ENCODE measurements at regions of chr20 and their contacts with region 1.

Region 1: GRCh38 chr20:20520776-20521175 is 152.9 kb downstream of the INSM1 start:
- DNase-seq: peak; percentile 67
- H3K4me3 Mint-ChIP-seq: no peak overlapping the region
- H3K27ac Mint-ChIP-seq: peak overlapping the region; percentile 29
- H3K4me1 Mint-ChIP-seq: peaks cover 19% of the 10 kb centered on the region
- H3K27me3 Mint-ChIP-seq: no peaks in the 10 kb centered on the region
- CTCF ChIP-seq: no peak

Region 2: DNA sequence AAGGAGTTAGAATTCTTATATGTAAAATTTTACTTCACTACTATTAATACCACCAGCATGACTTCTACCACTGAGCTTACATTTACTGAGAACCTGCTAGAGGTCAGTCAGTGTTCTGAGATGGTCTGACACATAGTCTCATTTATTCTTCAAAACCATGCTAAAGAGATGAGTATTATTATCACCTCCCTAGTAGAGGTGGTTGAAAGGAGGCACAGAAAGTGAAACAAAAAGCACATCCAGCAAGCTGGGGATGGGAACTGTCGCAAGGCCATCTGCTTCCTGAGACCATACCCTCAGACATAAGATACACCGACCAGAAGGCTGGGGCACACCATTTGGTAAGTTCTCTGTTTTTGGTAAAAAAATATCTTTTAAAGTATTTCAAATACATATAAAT is 15.2 kb before region 1 on chr20:
- CTCF ChIA-PET with region 1: interaction called, 3 read pairs
- POLR2A ChIA-PET with region 1: interaction called, 23 read pairs
- intact Hi-C with region 1: no loop called
- DNase-seq: no peak
- H3K4me3 Mint-ChIP-seq: no peak overlapping the region
- H3K27ac Mint-ChIP-seq: no peak overlapping the region
- H3K4me1 Mint-ChIP-seq: no peaks in the 10 kb centered on the region
- H3K27me3 Mint-ChIP-seq: no peaks in the 10 kb centered on the region
- CTCF ChIP-seq: no peak

Region 3: GRCh38 chr20:20535051-20535450 is 14.3 kb after region 1 on chr20:
- CTCF ChIA-PET with region 1: interaction called, 6 read pairs
- POLR2A ChIA-PET with region 1: interaction called, 10 read pairs
- intact Hi-C with region 1: no loop called
- DNase-seq: no peak
- H3K4me3 Mint-ChIP-seq: no peak overlapping the region
- H3K27ac Mint-ChIP-seq: no peak overlapping the region
- H3K4me1 Mint-ChIP-seq: no peaks in the 10 kb centered on the region
- H3K27me3 Mint-ChIP-seq: no peaks in the 10 kb centered on the region
- CTCF ChIP-seq: no peak